ENCODE measurements at regions of chr6 and their contacts with region 1.

Region 1: DNA sequence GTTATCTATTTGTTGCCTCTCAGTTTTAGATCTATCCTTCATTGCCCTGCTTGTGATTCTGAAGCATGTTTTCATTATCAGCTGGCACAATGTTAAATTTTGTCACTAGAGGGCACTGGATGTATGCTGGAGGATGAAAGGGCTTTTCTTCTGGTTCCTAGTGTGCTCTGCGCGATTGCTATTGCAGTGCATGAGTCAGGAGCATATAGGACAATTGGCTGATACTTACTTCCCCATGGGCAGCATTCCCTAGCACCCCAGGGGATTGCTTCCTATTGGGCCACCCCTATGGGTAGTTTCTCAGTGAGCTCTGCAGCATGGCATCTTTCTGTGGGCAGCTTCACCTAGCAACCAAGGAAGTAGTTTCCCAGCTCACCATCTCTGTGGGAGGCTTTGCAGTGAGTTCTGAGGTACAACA is 280.3 kb upstream of the SYNCRIP start:
- DNase-seq: peak in 2 of 4 experiments; percentile 17 to 36
- ATAC-seq: peak; percentile 79
- H3K4me3 ChIP-seq: no peak overlapping the region
- H3K27ac ChIP-seq: no peak overlapping the region
- H3K4me1 ChIP-seq: no peaks in the 10 kb centered on the region
- H3K27me3 ChIP-seq: no peaks in the 10 kb centered on the region
- CTCF ChIP-seq: peak; percentile 51 to 70 (median 60); a peak in 5 of 6 replicates
- EP300 ChIP-seq: no peak
- POLR2A ChIP-seq: no peak
- RAD21 ChIP-seq: peak; percentile 66 to 75

Region 2: DNA sequence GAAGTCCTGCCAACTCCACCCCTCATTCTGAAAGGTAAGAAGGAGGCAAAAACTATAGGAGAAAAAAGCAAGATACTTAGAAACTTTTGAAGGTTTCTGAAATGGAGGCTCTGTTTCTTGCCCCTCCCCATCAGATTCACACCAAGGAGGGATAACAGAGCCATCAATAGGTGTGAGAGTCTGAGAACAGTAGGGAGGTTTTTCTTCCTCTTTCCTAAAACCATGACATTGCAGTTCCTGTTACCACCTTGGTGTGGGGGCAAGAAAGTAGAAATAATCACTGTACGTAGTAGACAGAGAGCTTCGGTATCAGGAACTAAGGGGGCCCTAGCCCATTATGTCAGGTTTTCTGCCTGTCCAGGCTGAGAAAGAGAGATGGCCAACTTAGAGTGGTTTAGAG is 52.9 kb after region 1 on chr6:
- CTCF ChIA-PET with region 1: no interaction called
- POLR2A ChIA-PET with region 1: no interaction called
- in situ Hi-C with region 1: no loop called
- intact Hi-C with region 1: no loop called
- DNase-seq: no peak
- ATAC-seq: no peak
- H3K4me3 ChIP-seq: no peak overlapping the region
- H3K27ac ChIP-seq: no peak overlapping the region
- H3K4me1 ChIP-seq: no peaks in the 10 kb centered on the region
- H3K27me3 ChIP-seq: no peaks in the 10 kb centered on the region
- CTCF ChIP-seq: no peak
- EP300 ChIP-seq: no peak
- POLR2A ChIP-seq: no peak
- RAD21 ChIP-seq: no peak

Region 3: GRCh38 chr6:86010915-86011786 is 88.1 kb after region 1 on chr6:
- CTCF ChIA-PET with region 1: no interaction called
- POLR2A ChIA-PET with region 1: no interaction called
- in situ Hi-C with region 1: no loop called
- intact Hi-C with region 1: no loop called
- DNase-seq: no peak
- ATAC-seq: no peak
- H3K4me3 ChIP-seq: no peak overlapping the region
- H3K27ac ChIP-seq: no peak overlapping the region
- H3K4me1 ChIP-seq: no peaks in the 10 kb centered on the region
- H3K27me3 ChIP-seq: no peaks in the 10 kb centered on the region
- CTCF ChIP-seq: no peak
- EP300 ChIP-seq: no peak
- POLR2A ChIP-seq: no peak
- RAD21 ChIP-seq: no peak

Region 4: DNA sequence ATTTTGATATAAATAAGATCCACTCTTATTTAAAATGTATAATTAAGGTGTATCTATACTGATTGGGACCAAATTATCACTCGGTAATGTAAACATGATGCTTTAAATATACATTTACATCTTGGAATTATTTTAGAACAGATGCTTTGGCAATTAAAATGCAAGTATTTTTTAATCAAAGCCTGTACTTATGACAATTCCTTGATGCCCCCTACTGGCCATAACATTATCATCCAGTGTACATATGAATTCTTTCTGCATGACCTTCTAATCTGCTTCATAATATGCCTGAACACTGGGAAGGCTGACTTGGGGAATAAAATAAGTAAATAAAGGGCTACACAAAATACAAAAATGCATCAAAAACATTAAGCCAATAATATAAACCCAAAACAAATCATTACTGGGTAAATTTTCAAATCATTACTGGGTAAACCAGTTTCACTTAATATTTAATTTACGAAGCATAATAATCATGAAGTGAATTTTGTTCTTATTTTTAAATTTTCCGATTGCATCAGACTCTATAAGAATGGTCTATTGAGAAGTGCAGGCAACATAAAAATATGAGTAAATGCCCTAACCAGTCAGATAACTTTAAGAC is 1106.8 kb after region 1 on chr6:
- CTCF ChIA-PET with region 1: no interaction called
- POLR2A ChIA-PET with region 1: no interaction called
- in situ Hi-C with region 1: no loop called
- intact Hi-C with region 1: loop called (anchors 5 kb)
- DNase-seq: peak; percentile 34 to 60 (median 50)
- ATAC-seq: peak; percentile 78
- H3K4me3 ChIP-seq: no peak overlapping the region
- H3K27ac ChIP-seq: no peak overlapping the region
- H3K4me1 ChIP-seq: no peaks in the 10 kb centered on the region
- H3K27me3 ChIP-seq: no peaks in the 10 kb centered on the region
- CTCF ChIP-seq: peak; percentile 36 to 68 (median 39); a peak in 4 of 6 replicates
- EP300 ChIP-seq: no peak
- POLR2A ChIP-seq: no peak
- RAD21 ChIP-seq: peak; percentile 62 to 71